Activated naive CD4-positive, alpha-beta T cell treated with anti-CD3 and anti-CD28 coated beads for 36 hours (primary cell): ENCODE measurements at regions of chr17 and their contacts with region 1.

Region 1: GRCh38 chr17:79839363-79840268 is at the start of gene CBX4:
- DNase-seq: peak; percentile 91
- H3K4me3 Mint-ChIP-seq: peak within 1 kb of the TSS; percentile 88
- H3K27ac Mint-ChIP-seq: peak within 1 kb of the TSS; percentile 78
- H3K4me1 Mint-ChIP-seq: peaks cover 58% of the 10 kb centered on the region
- H3K27me3 Mint-ChIP-seq: peaks cover 31% of the 10 kb centered on the region
- total RNA-seq, gene CBX4: 22.7 to 26.3 TPM

Region 2: DNA sequence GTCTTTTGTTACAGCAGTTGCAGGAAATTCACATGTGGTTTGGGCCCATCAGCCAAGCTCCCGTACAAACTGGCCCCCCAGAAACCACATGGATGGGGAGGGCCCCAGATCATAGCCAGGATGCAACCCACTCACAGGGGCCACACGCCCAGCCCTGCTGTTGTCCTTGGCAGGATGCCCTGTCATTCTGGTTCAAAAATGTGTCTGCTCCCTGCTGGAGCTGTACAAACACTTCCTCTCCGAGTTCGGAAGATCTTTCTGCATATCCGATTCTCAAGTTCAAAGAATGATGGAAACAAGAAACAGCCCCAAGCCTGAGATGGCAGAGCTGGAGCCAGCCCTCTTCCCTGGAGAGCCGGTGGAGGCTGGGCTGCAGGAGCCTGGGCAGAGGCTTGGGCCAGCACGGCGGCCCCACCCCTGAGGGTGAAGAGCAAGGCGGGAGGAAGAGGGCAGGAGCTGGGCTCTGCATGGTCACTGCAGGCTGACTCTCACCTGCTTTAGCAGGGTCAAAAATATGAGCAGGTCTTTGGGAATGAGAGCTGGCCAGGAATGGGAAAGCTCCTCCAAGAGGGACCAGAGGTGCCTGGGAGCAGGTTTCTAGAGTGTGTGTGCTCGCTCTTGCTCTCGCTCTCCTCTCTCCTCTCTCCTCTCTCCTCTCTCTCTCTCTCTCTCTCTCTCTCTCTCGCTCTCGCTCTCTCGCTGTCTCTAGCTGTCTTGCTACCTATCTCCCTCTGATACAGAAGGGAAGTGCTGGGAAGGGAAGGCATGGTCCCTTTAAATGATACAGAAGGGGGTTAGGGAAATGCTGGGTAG is 143.6 kb before region 1 on chr17:
- CTCF ChIA-PET with region 1: no interaction called
- intact Hi-C with region 1: no loop called
- DNase-seq: no peak
- H3K4me3 Mint-ChIP-seq: no peak overlapping the region
- H3K27ac Mint-ChIP-seq: no peak overlapping the region
- H3K4me1 Mint-ChIP-seq: peaks cover 9% of the 10 kb centered on the region
- H3K27me3 Mint-ChIP-seq: peaks cover 38% of the 10 kb centered on the region

Region 3: GRCh38 chr17:79749156-79749815 is 90.3 kb before region 1 on chr17:
- CTCF ChIA-PET with region 1: interaction called, 4 read pairs
- intact Hi-C with region 1: loop called (anchors 2 kb)
- DNase-seq: no peak
- H3K4me3 Mint-ChIP-seq: no peak overlapping the region
- H3K27ac Mint-ChIP-seq: no peak overlapping the region
- H3K4me1 Mint-ChIP-seq: peaks cover 23% of the 10 kb centered on the region
- H3K27me3 Mint-ChIP-seq: peaks cover 34% of the 10 kb centered on the region

Region 4: DNA sequence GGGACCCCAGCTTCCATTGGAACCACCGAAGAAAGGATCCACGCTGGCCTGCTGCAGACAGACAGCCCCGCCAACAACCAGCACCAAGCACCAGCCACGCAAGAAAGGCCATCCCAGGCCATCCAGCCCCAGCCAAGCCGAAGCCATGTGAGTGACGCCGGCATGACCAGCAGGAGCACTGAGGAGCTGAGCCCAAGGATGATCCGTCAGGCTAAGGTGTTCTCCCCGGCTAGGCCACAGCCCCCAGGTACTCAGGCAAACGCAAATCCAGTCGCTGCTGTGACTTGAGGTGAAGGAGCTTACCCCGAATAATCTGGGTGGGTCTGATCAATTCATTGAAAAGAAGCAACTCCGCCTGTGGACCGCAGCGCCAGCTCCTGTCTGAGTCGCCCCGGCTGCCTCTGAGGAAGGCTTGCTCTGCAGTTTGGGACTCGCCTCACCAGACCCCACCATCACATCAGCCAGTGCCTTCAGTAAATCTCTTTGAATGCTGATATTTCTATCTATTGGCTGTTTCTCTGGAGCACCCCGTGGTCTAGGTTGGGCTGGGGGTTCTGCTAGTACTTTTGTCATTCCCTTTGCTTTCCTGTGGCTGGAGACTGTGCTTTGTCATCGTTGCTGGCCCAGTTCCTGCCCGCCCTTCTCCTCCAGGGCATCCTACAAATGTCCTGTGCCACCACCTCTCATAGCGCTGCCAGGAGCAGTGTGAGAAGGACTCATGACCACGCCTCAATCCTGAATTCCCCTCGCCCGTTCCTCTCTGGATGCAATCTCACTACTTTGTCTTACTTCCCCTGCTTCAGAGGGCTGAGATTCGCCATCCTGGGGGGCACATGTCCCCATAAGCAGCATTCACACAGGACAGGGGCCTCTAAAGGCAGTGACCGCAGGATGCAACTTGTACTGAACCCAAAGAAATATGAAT is 69.8 kb before region 1 on chr17:
- CTCF ChIA-PET with region 1: no interaction called
- intact Hi-C with region 1: no loop called
- DNase-seq: no peak
- H3K4me3 Mint-ChIP-seq: no peak overlapping the region
- H3K27ac Mint-ChIP-seq: no peak overlapping the region
- H3K4me1 Mint-ChIP-seq: no peaks in the 10 kb centered on the region
- H3K27me3 Mint-ChIP-seq: peaks cover 27% of the 10 kb centered on the region

Region 5: DNA sequence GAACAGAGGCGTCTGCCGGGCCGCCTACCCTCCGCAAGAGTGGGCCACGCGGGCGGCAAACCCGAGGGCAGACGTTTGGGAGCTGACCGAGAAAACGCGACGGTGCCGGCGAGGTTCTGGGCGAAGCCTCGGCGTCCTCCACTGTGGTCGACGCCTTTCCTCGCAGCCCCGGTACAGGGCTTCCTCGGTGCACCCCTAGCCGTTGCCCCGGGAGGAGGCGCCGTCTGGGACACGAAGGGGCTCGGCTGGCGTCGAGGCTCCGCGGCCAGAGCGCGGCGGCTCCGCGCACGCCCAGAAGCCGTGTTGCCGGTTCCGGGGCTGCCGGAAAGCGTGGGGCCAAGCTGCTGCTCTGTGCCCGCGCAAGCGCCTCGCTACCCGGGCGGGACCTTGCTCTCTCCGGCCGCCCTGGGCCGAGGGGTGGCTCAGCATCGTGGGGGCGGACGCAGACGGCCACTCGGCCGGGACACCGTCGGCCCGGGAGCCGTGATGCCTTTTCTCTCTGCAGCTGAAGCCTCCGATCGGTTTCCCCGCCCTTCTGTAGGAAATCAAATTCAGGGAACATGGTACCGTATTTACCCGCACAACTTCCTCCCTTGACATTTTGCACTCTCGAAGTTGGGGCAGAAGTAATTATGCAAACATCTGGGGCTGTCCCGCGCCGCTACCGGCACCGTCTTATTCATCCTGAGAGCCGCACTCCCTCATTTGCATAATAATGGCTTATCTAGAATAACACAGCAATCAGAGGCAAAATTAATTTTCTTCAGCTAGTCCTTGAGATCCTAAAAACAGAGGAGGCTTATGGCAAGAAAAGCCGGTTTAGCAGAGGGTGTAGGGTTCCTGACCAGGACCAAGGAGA is 35.4 kb before region 1 on chr17:
- CTCF ChIA-PET with region 1: interaction called, 7 read pairs
- intact Hi-C with region 1: loop called (anchors 2 kb)
- DNase-seq: peak; percentile 94
- H3K4me3 Mint-ChIP-seq: peak overlapping the region; percentile 67
- H3K27ac Mint-ChIP-seq: peak overlapping the region; percentile 74
- H3K4me1 Mint-ChIP-seq: peaks cover 44% of the 10 kb centered on the region
- H3K27me3 Mint-ChIP-seq: peaks cover 85% of the 10 kb centered on the region

Region 6: GRCh38 chr17:79818026-79818758 is 21.4 kb before region 1 on chr17:
- CTCF ChIA-PET with region 1: interaction called, 14 read pairs
- intact Hi-C with region 1: no loop called
- DNase-seq: no peak
- H3K4me3 Mint-ChIP-seq: no peak overlapping the region
- H3K27ac Mint-ChIP-seq: no peak overlapping the region
- H3K4me1 Mint-ChIP-seq: peaks cover 6% of the 10 kb centered on the region
- H3K27me3 Mint-ChIP-seq: peaks cover 19% of the 10 kb centered on the region

Region 7: GRCh38 chr17:79970576-79971068 is 131.0 kb after region 1 on chr17:
- CTCF ChIA-PET with region 1: no interaction called
- intact Hi-C with region 1: loop called (anchors 5 kb)
- DNase-seq: peak; percentile 66
- H3K4me3 Mint-ChIP-seq: no peak overlapping the region
- H3K27ac Mint-ChIP-seq: no peak overlapping the region
- H3K4me1 Mint-ChIP-seq: no peaks in the 10 kb centered on the region
- H3K27me3 Mint-ChIP-seq: no peaks in the 10 kb centered on the region

Region 8: GRCh38 chr17:79997011-79997660 is 157.5 kb after region 1 on chr17:
- CTCF ChIA-PET with region 1: interaction called, 3 read pairs
- intact Hi-C with region 1: loop called (anchors 1 kb)
- DNase-seq: peak; percentile 92
- H3K4me3 Mint-ChIP-seq: peak overlapping the region; percentile 68
- H3K27ac Mint-ChIP-seq: peak overlapping the region; percentile 97
- H3K4me1 Mint-ChIP-seq: peaks cover 59% of the 10 kb centered on the region
- H3K27me3 Mint-ChIP-seq: no peaks in the 10 kb centered on the region